Ovary (tissue), 10 donors: ENCODE measurements at regions of chr14 and their contacts with region 1.

Region 1: GRCh38 chr14:81464247-81465002 is 64.3 kb upstream of the STON2 start:
- DNase-seq: peak in 2 of 5 donors; percentile 23 to 62
- H3K4me3 ChIP-seq: peak overlapping the region; percentile 36
- H3K27ac ChIP-seq: no peak overlapping the region
- H3K4me1 ChIP-seq: no peaks in the 10 kb centered on the region
- H3K27me3 ChIP-seq: no peaks in the 10 kb centered on the region
- CTCF ChIP-seq: peak; percentile 79 to 81 (median 79)
- EP300 ChIP-seq: no peak
- POLR2A ChIP-seq: no peak

Region 2: GRCh38 chr14:80987235-80988032 is 477.0 kb before region 1 on chr14:
- intact Hi-C with region 1: loop called in 1 of 4 experiments (anchors 10 kb)
- DNase-seq: peak in 4 of 5 donors; percentile 16 to 59 (median 33)
- H3K4me3 ChIP-seq: no peak overlapping the region
- H3K27ac ChIP-seq: no peak overlapping the region
- H3K4me1 ChIP-seq: no peaks in the 10 kb centered on the region
- H3K27me3 ChIP-seq: no peaks in the 10 kb centered on the region
- CTCF ChIP-seq: peak; percentile 48 to 67 (median 60)
- EP300 ChIP-seq: no peak
- POLR2A ChIP-seq: no peak